ENCODE measurements at regions of chr11 and their contacts with region 1.

Region 1: GRCh38 chr11:73876424-73877300 is at the starts of genes COA4 and PAAF1:
- DNase-seq: peak; percentile 97
- H3K4me3 Mint-ChIP-seq: peak within 1 kb of the TSS; percentile 95
- H3K27ac Mint-ChIP-seq: peak within 1 kb of the TSS; percentile 92
- H3K4me1 Mint-ChIP-seq: peaks cover 42% of the 10 kb centered on the region
- H3K27me3 Mint-ChIP-seq: no peaks in the 10 kb centered on the region
- total RNA-seq, gene COA4: 87.8 to 94.2 TPM
- total RNA-seq, gene PAAF1: 29.7 to 30.4 TPM

Region 2: GRCh38 chr11:73760679-73761402 is 115.8 kb before region 1 on chr11 and contains the start of gene RAB6A:
- CTCF ChIA-PET with region 1: no interaction called
- intact Hi-C with region 1: loop called (anchors 1 kb)
- DNase-seq: peak; percentile 100
- H3K4me3 Mint-ChIP-seq: peak within 1 kb of the TSS; percentile 88
- H3K27ac Mint-ChIP-seq: peak within 1 kb of the TSS; percentile 90
- H3K4me1 Mint-ChIP-seq: peaks cover 34% of the 10 kb centered on the region
- H3K27me3 Mint-ChIP-seq: no peaks in the 10 kb centered on the region
- total RNA-seq, gene RAB6A: 36.7 to 41.2 TPM

Region 3: DNA sequence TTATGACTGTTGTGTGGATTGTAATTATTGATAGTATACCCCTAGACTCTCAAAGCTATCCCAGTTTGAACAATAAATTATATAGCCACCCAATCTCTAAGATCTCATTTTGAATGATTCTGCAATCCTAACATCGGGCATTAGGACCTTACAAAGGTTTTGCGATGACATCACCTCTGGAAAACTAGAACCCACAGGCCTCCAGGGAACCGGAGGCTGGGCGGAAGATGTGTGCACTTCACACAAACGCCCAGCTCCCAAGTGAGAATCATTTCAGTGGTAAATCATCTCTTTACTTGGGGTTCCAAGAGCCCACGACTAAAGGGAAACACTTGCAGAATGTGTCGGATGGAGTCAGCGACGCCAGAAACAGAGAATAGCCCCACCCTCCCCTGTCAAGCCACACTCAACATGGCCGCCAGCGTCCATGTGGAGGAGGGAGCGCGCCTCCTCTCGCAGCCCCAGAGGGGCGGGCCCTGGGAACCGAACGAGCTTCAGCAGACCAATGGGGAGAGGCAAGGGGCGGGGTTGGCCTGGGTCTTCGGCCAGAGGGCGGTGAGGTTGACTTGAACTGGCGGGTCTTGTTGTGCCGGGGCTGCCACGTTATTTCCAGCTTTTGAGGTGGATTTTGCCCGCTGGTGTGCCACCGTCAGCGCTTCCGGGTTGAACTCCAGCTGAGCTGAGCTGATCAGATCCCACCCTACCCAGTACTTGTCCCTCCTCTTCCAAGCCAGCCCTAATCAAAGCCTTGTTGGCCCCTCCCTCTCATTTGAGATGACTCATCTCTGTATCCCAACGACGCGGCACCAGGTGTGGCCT is 97.4 kb before region 1 on chr11:
- CTCF ChIA-PET with region 1: no interaction called
- intact Hi-C with region 1: loop called (anchors 1 kb)
- DNase-seq: peak; percentile 99
- H3K4me3 Mint-ChIP-seq: peak overlapping the region; percentile 85
- H3K27ac Mint-ChIP-seq: peak overlapping the region; percentile 98
- H3K4me1 Mint-ChIP-seq: peaks cover 14% of the 10 kb centered on the region
- H3K27me3 Mint-ChIP-seq: no peaks in the 10 kb centered on the region

Region 4: DNA sequence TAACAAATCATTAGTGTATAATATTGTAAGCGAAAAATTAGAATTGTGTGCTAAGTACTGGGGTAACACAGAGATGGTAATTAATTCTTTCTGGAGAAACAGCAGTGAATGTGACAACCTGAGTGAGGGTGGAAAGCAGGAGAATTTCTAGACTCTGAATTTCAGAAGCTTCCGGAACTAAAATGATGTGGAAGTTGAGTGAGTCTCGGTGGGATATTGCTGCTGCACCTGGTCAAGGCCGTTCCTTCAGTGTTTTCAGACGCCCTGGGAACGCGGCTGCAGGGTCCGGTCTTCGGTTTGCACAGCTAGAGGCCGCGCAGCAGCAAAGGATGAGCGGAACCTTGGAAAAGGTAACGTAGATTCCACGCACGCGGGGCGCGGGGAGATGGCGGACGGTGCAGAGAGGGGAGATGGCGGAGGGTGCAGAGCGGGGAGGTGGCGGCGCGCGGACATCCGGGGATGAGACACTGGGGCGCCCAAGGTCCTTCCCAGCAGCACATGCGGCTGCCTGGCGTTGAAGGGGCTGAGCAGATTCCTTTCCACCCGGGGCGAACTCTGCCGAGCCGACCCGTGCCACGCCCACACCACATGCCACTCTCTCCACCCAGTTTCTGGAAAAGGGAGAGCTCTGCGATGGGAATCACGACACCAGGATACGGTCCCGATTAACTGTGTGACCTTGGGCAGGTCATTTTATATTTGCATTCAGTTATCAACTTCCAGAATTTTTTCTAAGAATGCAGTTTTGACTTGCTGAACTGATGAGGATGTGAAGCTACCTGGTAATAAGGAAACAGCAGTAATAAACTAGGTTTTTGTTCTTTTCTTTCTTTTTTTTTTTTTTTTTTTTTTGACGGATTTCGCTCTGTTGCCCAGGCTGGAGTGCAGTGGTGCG is 88.8 kb before region 1 on chr11 and contains the start of gene MRPL48:
- CTCF ChIA-PET with region 1: no interaction called
- intact Hi-C with region 1: loop called (anchors 1 kb)
- DNase-seq: peak; percentile 94
- H3K4me3 Mint-ChIP-seq: peak within 1 kb of the TSS; percentile 97
- H3K27ac Mint-ChIP-seq: peak within 1 kb of the TSS; percentile 98
- H3K4me1 Mint-ChIP-seq: peaks cover 13% of the 10 kb centered on the region
- H3K27me3 Mint-ChIP-seq: no peaks in the 10 kb centered on the region
- total RNA-seq, gene MRPL48: 49.2 to 53.5 TPM

Region 5: GRCh38 chr11:73982969-73983740 is 106.5 kb after region 1 on chr11:
- CTCF ChIA-PET with region 1: no interaction called
- intact Hi-C with region 1: loop called (anchors 1 kb)
- DNase-seq: peak; percentile 96
- H3K4me3 Mint-ChIP-seq: peak overlapping the region; percentile 98
- H3K27ac Mint-ChIP-seq: peak overlapping the region; percentile 99
- H3K4me1 Mint-ChIP-seq: peaks cover 45% of the 10 kb centered on the region
- H3K27me3 Mint-ChIP-seq: no peaks in the 10 kb centered on the region

Region 6: GRCh38 chr11:74011360-74012073 is 134.9 kb after region 1 on chr11:
- CTCF ChIA-PET with region 1: no interaction called
- intact Hi-C with region 1: loop called (anchors 1 kb)
- DNase-seq: peak; percentile 72
- H3K4me3 Mint-ChIP-seq: no peak overlapping the region
- H3K27ac Mint-ChIP-seq: peak overlapping the region; percentile 92
- H3K4me1 Mint-ChIP-seq: peaks cover 77% of the 10 kb centered on the region
- H3K27me3 Mint-ChIP-seq: no peaks in the 10 kb centered on the region

Measured in activated naive CD4-positive, alpha-beta T cell treated with anti-CD3 and anti-CD28 coated beads for 36 hours (primary cell).